ENCODE measurements at regions of chr2 and their contacts with region 1.

Region 1: DNA sequence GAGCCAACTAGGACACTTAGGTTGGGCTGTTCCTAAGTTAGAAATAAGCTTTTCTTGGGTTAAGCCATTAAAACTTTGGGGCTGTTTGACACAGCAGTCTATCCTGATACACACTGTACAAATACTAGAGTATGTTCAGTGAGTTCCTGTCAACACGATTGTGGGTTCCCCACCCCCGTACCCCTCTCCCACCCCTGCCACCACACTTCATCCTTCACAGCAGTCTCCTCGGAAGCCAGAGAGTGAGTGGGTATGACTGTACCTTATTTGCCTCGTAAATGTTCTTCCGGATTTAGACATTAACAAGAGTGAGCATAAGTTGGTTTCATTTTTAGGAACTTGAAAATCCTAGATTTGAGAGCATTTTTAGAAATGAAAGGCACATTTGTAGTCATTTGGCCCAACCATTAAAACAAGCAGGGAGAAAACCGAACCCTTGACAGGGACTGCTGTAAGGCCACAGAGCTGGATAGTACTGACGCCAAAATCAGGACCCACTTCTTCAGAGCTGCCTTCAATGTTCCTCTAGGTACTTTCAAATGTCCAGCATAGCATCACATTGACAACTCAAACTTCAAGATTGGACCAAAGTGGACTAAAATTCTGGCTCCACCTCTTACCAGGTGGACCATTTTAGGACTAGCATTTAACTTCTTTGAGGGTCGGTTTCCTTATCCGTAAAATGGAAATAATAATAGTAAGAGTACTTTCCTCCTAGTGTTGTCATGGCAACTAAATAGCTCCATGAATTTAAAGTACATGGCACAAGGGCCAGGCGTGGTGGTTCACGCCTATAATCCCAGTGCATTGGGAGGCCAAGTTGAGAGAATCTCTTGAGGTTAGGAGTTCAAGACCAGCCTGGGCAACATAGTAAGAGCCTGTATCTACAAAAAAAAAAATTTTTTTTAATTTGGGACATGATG is 166.3 kb upstream of the SERTAD2 start:
- DNase-seq: peak; percentile 30
- H3K4me3 Mint-ChIP-seq: peak overlapping the region; percentile 59
- H3K27ac Mint-ChIP-seq: peak overlapping the region; percentile 91
- H3K4me1 Mint-ChIP-seq: peaks cover 31% of the 10 kb centered on the region
- H3K27me3 Mint-ChIP-seq: no peaks in the 10 kb centered on the region

Region 2: GRCh38 chr2:64609227-64609941 is 210.7 kb before region 1 on chr2:
- intact Hi-C with region 1: loop called (anchors 5 kb)
- DNase-seq: peak; percentile 69
- H3K4me3 Mint-ChIP-seq: peak overlapping the region; percentile 66
- H3K27ac Mint-ChIP-seq: peak overlapping the region; percentile 42
- H3K4me1 Mint-ChIP-seq: peaks cover 24% of the 10 kb centered on the region
- H3K27me3 Mint-ChIP-seq: peaks cover 21% of the 10 kb centered on the region

Region 3: GRCh38 chr2:64859312-64860212 is 39.5 kb after region 1 on chr2:
- intact Hi-C with region 1: loop called (anchors 5 kb)
- DNase-seq: no peak
- H3K4me3 Mint-ChIP-seq: no peak overlapping the region
- H3K27ac Mint-ChIP-seq: no peak overlapping the region
- H3K4me1 Mint-ChIP-seq: peaks cover 6% of the 10 kb centered on the region
- H3K27me3 Mint-ChIP-seq: peaks cover 7% of the 10 kb centered on the region

Measured in activated T-helper 2 cell treated with anti-CD3 and anti-CD28 coated beads, Interferon-gamma antibody, Interleukin-2, Interleukin-4, amounts not matched to agents 10 μg/mL and 5 μg/mL and 100 μg/mL, durations not matched to agents 14 hours and 24 hours and 36 hours (primary cell).